Posterior cingulate gyrus (tissue), 11 donors: ENCODE measurements at regions of chr7 and their contacts with region 1.

Region 1: DNA sequence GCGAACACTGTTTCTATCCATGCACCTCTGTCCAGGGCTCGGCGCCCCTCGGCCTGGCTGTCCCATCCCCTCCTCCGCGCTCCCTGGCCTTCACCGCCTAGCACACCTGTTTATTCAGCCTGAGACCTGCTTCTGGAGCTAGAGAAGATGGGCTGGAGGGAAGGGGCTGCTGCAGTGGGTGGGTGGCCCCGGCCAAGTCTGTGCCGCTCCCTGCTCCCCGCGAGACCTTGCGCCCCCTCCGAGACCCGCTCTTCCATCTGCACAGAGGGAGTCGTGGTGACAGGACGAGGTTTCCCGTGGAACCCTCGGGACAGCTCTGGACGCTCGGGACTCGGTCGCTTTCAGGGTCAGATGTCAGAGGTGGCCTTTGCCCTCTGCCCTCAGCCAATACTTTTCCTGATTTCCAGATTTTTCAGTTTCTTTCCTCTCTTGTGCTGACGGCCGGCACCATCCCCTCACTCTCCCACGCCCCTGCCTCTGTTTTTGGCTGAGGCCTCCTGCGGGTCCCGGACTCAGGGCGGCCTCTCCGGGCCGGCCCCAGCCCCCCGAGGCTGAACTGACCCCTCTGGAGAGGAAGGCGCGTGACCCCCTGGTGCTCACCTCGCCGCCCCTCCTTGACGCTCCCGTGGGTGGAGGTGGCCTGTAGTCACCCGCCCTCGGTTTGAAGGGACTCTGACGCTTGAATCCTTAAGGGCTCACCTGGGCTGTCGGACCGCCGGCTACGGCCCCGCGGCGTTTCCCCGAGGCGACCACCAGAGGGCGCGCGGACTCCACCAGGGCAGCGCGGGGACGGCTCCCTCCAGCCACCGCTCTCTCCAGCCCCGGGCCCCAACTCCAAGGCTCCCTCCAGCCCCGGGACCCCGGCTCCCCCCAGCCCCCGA is 15.6 kb downstream of the SHH start:
- DNase-seq: peak in 8 of 10 donors; percentile 65 to 94 (median 72)

Region 2: DNA sequence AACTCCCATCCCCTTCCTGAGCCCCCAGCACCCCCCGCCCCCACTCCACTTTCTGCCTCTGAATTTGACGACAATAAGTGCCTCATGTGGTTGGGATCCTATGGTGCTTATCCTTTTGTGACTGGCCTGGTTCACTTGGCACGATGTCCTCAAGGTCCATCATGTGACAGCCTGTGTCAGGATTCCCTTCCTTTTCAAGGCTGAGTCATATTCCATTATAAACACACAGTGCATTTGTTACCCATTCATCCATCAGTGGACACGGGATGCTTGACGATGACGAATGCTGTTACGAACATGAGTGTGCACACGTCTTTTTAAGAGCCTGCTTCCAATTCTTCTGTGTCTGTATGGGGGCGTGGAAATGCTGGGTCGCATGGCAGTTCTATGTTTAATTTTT is 11.1 kb before region 1 on chr7:
- intact Hi-C with region 1: no loop called
- DNase-seq: no peak

Region 3: DNA sequence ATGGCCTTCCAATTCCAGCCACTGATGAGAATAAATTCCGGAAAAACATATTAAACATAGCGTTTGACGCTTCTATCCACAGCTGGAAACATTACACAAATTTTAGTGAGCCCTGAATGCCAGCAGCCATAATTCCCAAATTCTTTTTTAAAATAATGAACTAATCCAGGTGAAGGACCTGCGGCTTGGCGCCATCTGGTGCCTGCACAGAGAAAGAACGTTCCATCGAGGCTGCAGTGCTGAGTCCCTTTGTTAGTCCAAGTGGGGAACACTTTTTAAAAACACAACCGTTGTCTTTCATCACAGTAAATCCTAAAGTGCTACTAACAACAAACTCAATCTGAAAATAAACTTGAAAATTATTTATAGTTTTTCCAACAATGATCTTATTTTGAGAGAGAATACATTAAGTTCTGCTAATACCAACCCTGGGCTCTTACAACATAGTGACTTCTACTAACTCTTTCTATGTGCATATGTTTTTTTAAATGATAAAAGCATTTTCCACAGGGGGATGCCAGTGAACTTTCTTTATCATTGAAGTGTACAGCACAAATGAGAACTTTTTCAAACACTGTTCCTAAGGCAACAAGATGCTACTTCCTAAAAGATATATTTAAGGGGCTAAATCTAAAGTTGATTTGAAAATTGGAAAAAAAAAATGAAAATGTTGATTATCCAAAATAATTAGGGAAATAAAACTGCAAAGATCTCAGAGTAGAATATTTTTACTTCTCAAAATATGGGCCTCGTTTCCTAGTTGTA is 677.0 kb after region 1 on chr7:
- intact Hi-C with region 1: loop called (anchors 2 kb)
- DNase-seq: peak; percentile 32 to 94 (median 58)

Region 4: GRCh38 chr7:156764016-156764669 is 967.5 kb after region 1 on chr7:
- intact Hi-C with region 1: loop called (anchors 5 kb)
- DNase-seq: peak; percentile 54 to 96 (median 74)

Region 5: GRCh38 chr7:156816943-156817572 is 1020.4 kb after region 1 on chr7:
- intact Hi-C with region 1: loop called (anchors 2 kb)
- DNase-seq: no peak